ENCODE measurements at regions of chr5 and their contacts with region 1.

Region 1: GRCh38 chr5:34686762-34687268 is 30.7 kb downstream of the RAI14 start:
- DNase-seq: peak; percentile 97
- H3K4me3 ChIP-seq: peak overlapping the region in 1 of 3 experiments; percentile 12
- H3K27ac ChIP-seq: peak overlapping the region; percentile 80
- H3K4me1 ChIP-seq: peaks cover 63% of the 10 kb centered on the region
- H3K27me3 ChIP-seq: no peaks in the 10 kb centered on the region
- CTCF ChIP-seq: peak in 1 of 2 donors; percentile 6
- POLR2A ChIP-seq: no peak

Region 2: DNA sequence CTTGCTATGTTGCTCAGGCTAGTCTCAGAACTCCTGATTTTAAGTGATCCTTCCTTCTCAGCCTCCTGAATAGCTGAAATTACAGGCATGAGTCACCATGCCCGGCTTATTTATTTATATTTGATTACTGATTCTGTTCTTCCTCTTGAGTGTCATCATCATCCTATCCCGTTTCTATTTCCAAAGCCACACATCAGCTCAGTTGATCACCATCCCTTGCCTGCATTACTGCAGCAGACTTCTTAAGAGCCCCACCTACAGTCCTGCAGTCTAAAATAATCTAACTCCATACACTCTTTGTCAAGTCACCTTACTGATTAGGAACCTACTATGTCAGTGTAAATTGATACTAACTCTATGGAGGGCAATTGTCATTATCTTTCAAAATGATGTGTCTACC is 169.6 kb before region 1 on chr5:
- CTCF ChIA-PET with region 1: interaction called, 25 read pairs
- POLR2A ChIA-PET with region 1: no interaction called
- dilution Hi-C with region 1: no loop called
- intact Hi-C with region 1: no loop called
- DNase-seq: peak; percentile 69
- H3K4me3 ChIP-seq: no peak overlapping the region
- H3K27ac ChIP-seq: peak overlapping the region; percentile 58
- H3K4me1 ChIP-seq: peaks cover 19% of the 10 kb centered on the region
- H3K27me3 ChIP-seq: no peaks in the 10 kb centered on the region
- CTCF ChIP-seq: no peak
- POLR2A ChIP-seq: no peak

Region 3: GRCh38 chr5:34674187-34674586 is 12.6 kb before region 1 on chr5:
- CTCF ChIA-PET with region 1: interaction called, 6 read pairs
- POLR2A ChIA-PET with region 1: interaction called, 6 read pairs
- dilution Hi-C with region 1: no loop called
- intact Hi-C with region 1: loop called (anchors 1 kb)
- DNase-seq: no peak
- H3K4me3 ChIP-seq: no peak overlapping the region
- H3K27ac ChIP-seq: peak overlapping the region; percentile 90
- H3K4me1 ChIP-seq: peaks cover 77% of the 10 kb centered on the region
- H3K27me3 ChIP-seq: no peaks in the 10 kb centered on the region
- CTCF ChIP-seq: no peak
- POLR2A ChIP-seq: no peak

Region 4: DNA sequence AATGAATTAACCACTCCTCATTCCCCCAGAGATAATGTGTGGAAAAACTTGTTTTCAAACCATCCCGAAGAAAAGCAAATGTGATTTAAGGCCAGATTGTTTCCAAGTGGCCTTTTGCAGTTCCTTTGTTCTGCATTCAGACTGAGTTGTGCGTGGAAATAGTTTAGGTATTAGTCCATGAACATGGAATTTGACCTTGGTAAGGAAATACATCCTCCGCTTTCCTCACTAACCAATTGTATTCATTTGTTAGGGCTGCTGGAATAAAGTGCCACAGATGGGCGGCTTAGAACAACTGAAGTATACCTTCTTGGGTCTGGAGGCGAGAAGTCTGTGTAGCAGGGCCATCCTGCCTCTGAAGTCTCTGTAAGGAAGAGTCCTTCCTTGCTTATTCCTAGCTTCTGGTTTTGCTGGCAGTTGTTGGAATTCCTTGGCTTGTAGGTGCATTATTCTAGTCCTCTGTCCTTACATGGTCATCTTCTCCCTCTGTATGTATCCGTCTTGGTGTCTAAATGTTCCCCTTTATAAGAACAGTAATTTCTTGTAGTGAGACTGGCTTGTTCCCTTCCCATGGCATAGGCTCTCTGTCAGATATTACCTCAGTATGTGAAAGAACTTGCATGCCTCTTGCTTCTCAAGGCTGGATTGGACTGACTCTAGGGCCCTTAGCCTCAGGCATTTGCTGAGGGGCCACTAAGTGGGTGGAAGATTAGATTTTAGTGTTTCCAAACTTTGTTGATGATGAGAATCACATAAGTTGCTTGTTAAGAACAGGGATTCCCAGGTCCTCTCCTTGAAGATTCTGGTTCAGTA is 23.3 kb after region 1 on chr5:
- CTCF ChIA-PET with region 1: interaction called, 8 read pairs
- POLR2A ChIA-PET with region 1: interaction called, 8 read pairs
- dilution Hi-C with region 1: no loop called
- intact Hi-C with region 1: loop called (anchors 1 kb)
- DNase-seq: peak; percentile 94
- H3K4me3 ChIP-seq: peak overlapping the region in 1 of 3 experiments; percentile 3
- H3K27ac ChIP-seq: peak overlapping the region; percentile 97
- H3K4me1 ChIP-seq: peaks cover 96% of the 10 kb centered on the region
- H3K27me3 ChIP-seq: no peaks in the 10 kb centered on the region
- CTCF ChIP-seq: no peak
- POLR2A ChIP-seq: peak; percentile 84

Region 5: GRCh38 chr5:34717426-34718327 is 30.9 kb after region 1 on chr5:
- CTCF ChIA-PET with region 1: interaction called, 18 read pairs
- POLR2A ChIA-PET with region 1: interaction called, 4 read pairs
- dilution Hi-C with region 1: no loop called
- intact Hi-C with region 1: loop called (anchors 1 kb)
- DNase-seq: peak; percentile 96
- H3K4me3 ChIP-seq: peak overlapping the region in 1 of 3 experiments; percentile 25
- H3K27ac ChIP-seq: peak overlapping the region; percentile 96
- H3K4me1 ChIP-seq: peaks cover 70% of the 10 kb centered on the region
- H3K27me3 ChIP-seq: no peaks in the 10 kb centered on the region
- CTCF ChIP-seq: no peak
- POLR2A ChIP-seq: peak; percentile 18